Activated CD4-positive, alpha-beta memory T cell treated with anti-CD3 and anti-CD28 coated beads for 36 hours (primary cell): ENCODE measurements at regions of chr16 and their contacts with region 1.

Region 1: GRCh38 chr16:30472328-30472942 is at the start of gene ITGAL:
- DNase-seq: peak; percentile 93
- H3K4me3 Mint-ChIP-seq: peak within 1 kb of the TSS; percentile 98
- H3K27ac Mint-ChIP-seq: peak within 1 kb of the TSS; percentile 97
- H3K4me1 Mint-ChIP-seq: peaks cover 53% of the 10 kb centered on the region
- H3K27me3 Mint-ChIP-seq: no peaks in the 10 kb centered on the region
- total RNA-seq, gene ITGAL: 218 to 226 TPM

Region 2: DNA sequence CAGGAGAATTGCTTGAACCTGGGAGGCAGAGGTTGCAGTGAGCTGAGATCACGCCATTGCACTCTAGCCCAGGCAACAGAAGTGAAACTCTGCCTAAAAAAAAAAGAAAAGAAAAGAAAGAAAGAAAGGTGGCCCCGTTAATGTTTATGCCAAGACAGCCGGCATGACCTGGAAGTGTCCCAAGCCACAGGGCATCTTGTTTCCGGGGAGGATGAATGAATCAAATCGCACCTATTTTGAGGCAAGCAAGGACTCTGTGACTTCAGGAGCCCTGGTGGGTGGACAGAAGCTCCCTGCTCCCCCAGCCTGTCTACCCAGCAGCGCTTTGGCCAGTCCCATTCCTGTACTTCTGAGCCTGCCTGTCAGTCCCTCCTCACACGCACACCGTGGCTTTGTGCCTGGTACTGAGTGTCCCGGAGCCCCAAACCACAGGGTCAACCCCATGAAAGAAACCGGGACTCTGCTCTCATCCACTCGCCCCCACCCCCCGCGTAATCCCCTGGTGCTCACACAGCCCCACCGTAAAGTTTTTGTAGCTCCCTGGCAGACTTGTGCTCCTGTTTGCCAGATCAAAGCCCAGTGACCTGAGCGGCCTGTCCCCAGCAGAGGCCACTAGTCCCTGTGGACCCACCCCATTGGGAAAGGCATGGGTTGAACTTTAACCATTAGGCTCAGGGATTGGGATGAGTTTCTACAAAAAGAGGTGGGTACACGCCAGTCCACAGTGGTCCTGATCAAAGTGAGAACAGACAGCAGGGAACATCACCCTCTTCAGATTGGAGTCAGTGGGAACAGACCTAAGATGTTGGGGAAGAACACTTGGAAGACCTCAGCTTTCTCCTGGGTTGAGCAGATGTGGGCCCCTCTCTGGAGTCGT is 136.6 kb before region 1 on chr16:
- CTCF ChIA-PET with region 1: no interaction called
- POLR2A ChIA-PET with region 1: no interaction called
- intact Hi-C with region 1: loop called (anchors 1 kb)
- DNase-seq: peak; percentile 61
- H3K4me3 Mint-ChIP-seq: peak overlapping the region; percentile 94
- H3K27ac Mint-ChIP-seq: peak overlapping the region; percentile 84
- H3K4me1 Mint-ChIP-seq: peaks cover 12% of the 10 kb centered on the region
- H3K27me3 Mint-ChIP-seq: no peaks in the 10 kb centered on the region

Region 3: DNA sequence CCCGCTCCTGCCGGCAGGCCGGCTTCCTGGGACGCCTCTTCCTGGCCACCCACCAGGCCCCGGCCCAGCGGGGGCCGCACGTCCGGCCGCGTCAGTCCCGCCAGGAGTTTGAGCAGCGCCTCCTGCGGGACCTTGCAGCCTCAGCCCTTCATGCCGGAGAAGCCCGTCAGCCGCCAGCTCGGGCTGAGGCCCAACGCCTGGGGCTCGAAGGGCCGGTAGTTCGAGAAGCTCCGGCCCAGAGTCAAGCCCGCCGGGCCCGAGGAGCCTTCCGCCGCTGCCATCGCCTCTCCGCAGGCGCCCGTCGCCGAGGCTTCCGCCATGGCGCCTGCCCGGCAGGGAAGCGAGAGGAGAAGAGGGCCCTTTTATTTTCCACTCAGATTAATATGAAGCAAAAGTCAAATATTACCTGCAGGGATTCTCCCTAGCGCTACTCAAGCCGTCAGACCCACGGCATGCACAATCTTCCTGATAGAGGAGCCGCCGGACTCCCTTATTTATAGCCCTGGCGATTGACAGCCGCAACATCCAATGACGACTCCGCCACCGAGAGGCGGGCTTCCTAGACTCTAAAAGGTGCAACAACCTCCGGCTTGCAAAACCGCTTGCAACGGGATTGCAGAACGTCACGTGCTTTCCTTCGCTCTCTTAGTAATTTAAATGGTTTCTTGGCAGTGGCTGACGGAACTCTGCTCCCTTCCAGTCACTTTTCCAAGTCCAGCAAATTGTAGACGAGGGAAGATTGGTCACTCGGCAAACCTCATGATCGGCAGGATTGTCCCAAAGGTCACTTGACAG is 26.8 kb before region 1 on chr16 and contains the start of gene SEPHS2:
- CTCF ChIA-PET with region 1: interaction called, 63 read pairs
- POLR2A ChIA-PET with region 1: interaction called, 23 read pairs
- intact Hi-C with region 1: loop called (anchors 1 kb)
- DNase-seq: peak; percentile 98
- H3K4me3 Mint-ChIP-seq: peak within 1 kb of the TSS; percentile 90
- H3K27ac Mint-ChIP-seq: peak within 1 kb of the TSS; percentile 91
- H3K4me1 Mint-ChIP-seq: peaks cover 37% of the 10 kb centered on the region
- H3K27me3 Mint-ChIP-seq: no peaks in the 10 kb centered on the region
- total RNA-seq, gene SEPHS2: 61.4 to 61.7 TPM

Region 4: GRCh38 chr16:30491744-30492308 is 19.4 kb after region 1 on chr16:
- CTCF ChIA-PET with region 1: interaction called, 4 read pairs
- POLR2A ChIA-PET with region 1: interaction called, 18 read pairs
- intact Hi-C with region 1: loop called (anchors 1 kb)
- DNase-seq: peak; percentile 52
- H3K4me3 Mint-ChIP-seq: no peak overlapping the region
- H3K27ac Mint-ChIP-seq: peak overlapping the region; percentile 71
- H3K4me1 Mint-ChIP-seq: peaks cover 25% of the 10 kb centered on the region
- H3K27me3 Mint-ChIP-seq: no peaks in the 10 kb centered on the region

Region 5: DNA sequence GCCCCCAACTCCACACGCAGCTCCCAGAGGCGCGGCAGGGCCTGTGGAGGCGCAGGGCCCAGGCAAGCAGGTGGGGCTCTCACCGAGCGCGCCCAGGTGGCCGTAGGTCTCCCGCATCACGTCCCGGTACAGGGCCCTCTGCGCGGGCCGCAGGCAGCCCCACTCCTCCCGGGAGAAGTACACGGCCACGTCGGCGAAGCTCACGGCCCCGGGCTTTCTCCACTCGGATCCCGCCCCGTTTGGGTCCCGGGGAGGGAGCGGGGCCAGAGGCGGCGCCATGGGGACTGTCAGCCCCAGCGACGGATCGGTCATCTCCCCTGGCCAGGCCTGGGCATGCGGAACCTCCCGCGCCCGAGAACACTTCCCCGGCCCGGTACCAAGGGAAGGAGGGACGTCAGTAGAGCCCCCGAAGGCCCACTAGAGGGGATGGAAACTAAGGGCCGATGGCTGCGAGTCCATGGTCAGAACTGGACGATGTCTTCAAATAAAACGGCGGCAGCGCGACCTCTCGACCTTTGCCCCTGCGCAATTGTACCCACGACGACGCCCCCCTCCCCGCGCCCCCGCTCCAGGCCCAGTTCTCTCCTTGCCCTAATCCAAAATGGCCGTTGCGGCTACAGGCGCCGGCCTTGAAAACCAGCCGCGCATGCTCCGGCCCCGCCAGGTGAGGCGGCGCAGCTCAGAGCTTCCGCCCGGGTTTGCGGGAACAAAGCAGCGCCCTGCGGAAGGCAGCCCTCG is 62.1 kb after region 1 on chr16 and contains the start of gene ZNF747:
- CTCF ChIA-PET with region 1: interaction called, 14 read pairs
- POLR2A ChIA-PET with region 1: interaction called, 14 read pairs
- intact Hi-C with region 1: no loop called
- DNase-seq: peak; percentile 94
- H3K4me3 Mint-ChIP-seq: peak within 1 kb of the TSS; percentile 89
- H3K27ac Mint-ChIP-seq: peak within 1 kb of the TSS; percentile 95
- H3K4me1 Mint-ChIP-seq: peaks cover 38% of the 10 kb centered on the region
- H3K27me3 Mint-ChIP-seq: no peaks in the 10 kb centered on the region
- total RNA-seq, gene ZNF747: 7.2 to 7.6 TPM

Region 6: DNA sequence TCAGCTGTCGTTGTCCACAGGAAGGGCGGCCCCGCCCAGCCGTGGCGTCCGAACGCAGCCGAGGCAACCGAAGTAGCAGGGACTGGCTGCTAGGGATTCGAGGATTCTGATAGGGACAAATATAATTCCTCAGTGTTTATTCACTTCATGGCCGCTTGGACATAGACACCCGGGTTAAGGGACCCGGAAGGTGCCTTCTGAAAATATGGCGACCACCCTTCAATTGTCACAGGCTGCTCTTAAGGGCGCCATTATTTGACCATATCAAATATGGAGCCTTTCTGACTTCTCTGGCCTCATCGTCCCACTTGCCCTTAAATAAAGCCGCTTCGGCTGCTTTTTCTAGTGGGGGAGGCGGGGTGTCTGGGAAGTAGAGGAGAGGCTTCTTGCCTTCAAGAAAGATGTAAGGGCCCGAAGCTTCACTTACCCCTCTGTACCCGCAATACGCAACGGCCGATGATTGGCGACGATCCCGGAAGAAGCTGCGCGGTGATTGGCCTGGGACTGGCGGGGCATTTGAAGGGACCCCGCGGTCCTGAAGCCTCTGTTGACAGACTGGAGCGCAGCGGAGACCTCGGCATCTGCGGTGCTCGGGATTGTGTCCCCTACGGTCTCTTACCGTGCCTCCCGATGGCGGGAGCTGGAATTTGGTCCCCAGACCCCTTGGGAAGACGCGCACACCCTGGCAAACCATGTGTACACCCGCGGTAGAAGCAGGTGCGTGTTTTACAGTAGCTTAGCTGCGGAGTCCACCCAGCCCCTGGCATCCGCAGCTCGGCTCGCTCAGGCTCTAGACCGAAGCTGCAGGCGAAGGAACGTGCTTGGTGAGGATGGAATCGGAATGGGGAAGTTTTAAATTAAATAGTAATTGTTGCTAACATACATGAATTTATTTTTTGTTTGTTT is 99.5 kb after region 1 on chr16 and contains the start of gene ZNF688:
- CTCF ChIA-PET with region 1: no interaction called
- POLR2A ChIA-PET with region 1: interaction called, 5 read pairs
- intact Hi-C with region 1: loop called (anchors 2 kb)
- DNase-seq: peak; percentile 96
- H3K4me3 Mint-ChIP-seq: peak within 1 kb of the TSS; percentile 91
- H3K27ac Mint-ChIP-seq: peak within 1 kb of the TSS; percentile 92
- H3K4me1 Mint-ChIP-seq: peaks cover 48% of the 10 kb centered on the region
- H3K27me3 Mint-ChIP-seq: no peaks in the 10 kb centered on the region
- total RNA-seq, gene ZNF688: 9.2 to 9.3 TPM